Activated T-helper 2 cell treated with anti-CD3 and anti-CD28 coated beads, Interferon-gamma antibody, Interleukin-2, Interleukin-4, amounts not matched to agents 10 μg/mL and 5 μg/mL and 100 μg/mL, durations not matched to agents 14 hours and 24 hours and 36 hours (primary cell): ENCODE measurements at regions of chr15 and their contacts with region 1.

Region 1: DNA sequence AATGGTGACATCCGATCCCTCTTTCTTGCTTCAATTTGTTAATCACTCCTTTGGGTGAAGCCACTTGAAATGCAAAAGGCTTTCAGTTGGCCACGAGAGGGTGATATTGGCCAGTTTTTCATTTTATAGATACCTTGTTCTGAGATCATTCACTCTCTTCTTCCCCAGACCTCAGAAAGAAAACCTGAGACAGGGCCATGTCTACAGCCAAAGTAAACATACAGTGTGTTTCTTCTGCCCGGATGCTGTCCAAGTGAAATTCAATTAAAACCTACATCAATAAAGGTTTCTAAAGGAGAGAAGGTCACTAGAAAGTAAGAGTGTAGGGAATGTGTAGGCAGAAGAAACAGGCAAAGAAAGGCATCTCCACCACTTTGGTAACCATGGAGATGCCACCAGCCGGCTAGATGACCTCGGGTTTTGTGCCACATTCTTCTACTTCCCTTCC is 39.5 kb upstream of the FMN1 start:
- DNase-seq: no peak
- H3K4me3 Mint-ChIP-seq: no peak overlapping the region
- H3K27ac Mint-ChIP-seq: no peak overlapping the region
- H3K4me1 Mint-ChIP-seq: no peaks in the 10 kb centered on the region
- H3K27me3 Mint-ChIP-seq: peaks cover 26% of the 10 kb centered on the region

Region 2: DNA sequence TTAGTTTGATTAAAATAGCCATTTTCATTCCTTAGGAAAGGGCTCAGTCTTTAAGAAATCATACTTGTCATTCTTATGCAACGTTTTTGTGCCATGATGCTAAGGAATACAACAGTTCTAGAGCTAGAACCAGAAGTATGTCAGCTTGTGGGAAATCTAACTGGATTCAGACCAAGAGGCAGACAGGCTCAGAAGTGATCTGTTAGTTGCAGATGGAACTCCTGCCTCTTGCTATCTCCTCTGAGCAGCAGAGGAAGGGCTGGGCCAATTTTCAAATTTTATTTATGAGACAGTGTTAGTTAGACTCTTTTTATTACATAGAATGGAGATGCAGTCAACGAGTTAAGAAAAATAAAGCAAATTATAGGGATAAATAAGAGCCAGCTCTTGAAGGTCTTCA is 28.3 kb after region 1 on chr15:
- intact Hi-C with region 1: no loop called
- DNase-seq: no peak
- H3K4me3 Mint-ChIP-seq: no peak overlapping the region
- H3K27ac Mint-ChIP-seq: no peak overlapping the region
- H3K4me1 Mint-ChIP-seq: no peaks in the 10 kb centered on the region
- H3K27me3 Mint-ChIP-seq: peaks cover 8% of the 10 kb centered on the region

Region 3: GRCh38 chr15:33700695-33701304 is 466.8 kb after region 1 on chr15:
- intact Hi-C with region 1: loop called (anchors 10 kb)
- DNase-seq: peak; percentile 36
- H3K4me3 Mint-ChIP-seq: no peak overlapping the region
- H3K27ac Mint-ChIP-seq: no peak overlapping the region
- H3K4me1 Mint-ChIP-seq: no peaks in the 10 kb centered on the region
- H3K27me3 Mint-ChIP-seq: peaks cover 2% of the 10 kb centered on the region